ENCODE measurements at regions of chr12 and their contacts with region 1.

Region 1: DNA sequence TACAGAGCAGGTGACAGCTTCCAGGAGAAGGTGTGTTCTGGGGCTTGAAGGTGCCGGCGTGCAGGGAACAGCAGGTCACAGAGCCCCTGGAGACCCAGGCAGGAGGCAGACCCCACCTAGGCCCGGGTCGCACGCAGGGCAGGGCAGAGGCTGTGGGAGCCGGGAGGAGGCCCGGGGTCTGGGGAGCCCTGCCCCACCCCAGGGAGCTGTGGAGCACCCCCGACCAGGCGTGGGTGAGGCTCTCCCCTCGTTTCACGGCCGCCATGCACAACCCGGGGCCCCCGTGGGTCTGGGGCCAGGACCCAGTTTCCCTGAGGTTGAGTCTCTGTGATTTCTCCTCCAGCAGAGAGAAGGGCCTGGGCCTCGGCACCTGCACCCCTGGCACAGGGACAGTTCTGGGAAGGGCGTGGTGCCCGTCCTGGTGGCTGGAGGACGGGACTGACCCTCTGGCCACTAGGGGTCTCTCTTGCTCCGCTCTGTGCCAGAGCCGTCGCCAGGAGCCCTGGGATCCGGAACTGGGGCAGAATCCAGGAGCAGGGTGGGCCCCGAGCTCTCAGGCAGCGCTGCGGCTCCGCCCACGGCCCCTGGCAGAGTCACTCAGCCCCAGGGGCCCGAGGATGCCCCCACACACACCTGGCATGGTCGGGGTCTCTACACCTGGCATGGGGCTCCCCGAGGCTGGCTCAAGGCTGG is 75.2 kb upstream of the FBRSL1 start:
- DNase-seq: peak; percentile 59
- ATAC-seq: peak; percentile 100
- H3K4me3 ChIP-seq: no peak overlapping the region
- H3K27ac ChIP-seq: no peak overlapping the region
- H3K4me1 ChIP-seq: no peaks in the 10 kb centered on the region
- H3K27me3 ChIP-seq: peaks cover 12% of the 10 kb centered on the region
- CTCF ChIP-seq: peak; percentile 95
- POLR2A ChIP-seq: peak; percentile 44; the same call in 1 of the 2 replicates
- RAD21 ChIP-seq: peak; percentile 98

Region 2: GRCh38 chr12:132084621-132085290 is 330.0 kb before region 1 on chr12:
- CTCF ChIA-PET with region 1: no interaction called
- POLR2A ChIA-PET with region 1: no interaction called
- dilution Hi-C with region 1: no loop called
- in situ Hi-C with region 1: no loop called
- intact Hi-C with region 1: no loop called
- DNase-seq: peak; percentile 33
- ATAC-seq: peak; percentile 38
- H3K4me3 ChIP-seq: peak overlapping the region; percentile 81
- H3K27ac ChIP-seq: peak overlapping the region; percentile 59; the same call in 1 of the 2 replicates
- H3K4me1 ChIP-seq: peaks cover 4% of the 10 kb centered on the region; the same call in 1 of the 2 replicates
- H3K27me3 ChIP-seq: no peaks in the 10 kb centered on the region
- CTCF ChIP-seq: no peak
- POLR2A ChIP-seq: no peak
- RAD21 ChIP-seq: no peak

Region 3: DNA sequence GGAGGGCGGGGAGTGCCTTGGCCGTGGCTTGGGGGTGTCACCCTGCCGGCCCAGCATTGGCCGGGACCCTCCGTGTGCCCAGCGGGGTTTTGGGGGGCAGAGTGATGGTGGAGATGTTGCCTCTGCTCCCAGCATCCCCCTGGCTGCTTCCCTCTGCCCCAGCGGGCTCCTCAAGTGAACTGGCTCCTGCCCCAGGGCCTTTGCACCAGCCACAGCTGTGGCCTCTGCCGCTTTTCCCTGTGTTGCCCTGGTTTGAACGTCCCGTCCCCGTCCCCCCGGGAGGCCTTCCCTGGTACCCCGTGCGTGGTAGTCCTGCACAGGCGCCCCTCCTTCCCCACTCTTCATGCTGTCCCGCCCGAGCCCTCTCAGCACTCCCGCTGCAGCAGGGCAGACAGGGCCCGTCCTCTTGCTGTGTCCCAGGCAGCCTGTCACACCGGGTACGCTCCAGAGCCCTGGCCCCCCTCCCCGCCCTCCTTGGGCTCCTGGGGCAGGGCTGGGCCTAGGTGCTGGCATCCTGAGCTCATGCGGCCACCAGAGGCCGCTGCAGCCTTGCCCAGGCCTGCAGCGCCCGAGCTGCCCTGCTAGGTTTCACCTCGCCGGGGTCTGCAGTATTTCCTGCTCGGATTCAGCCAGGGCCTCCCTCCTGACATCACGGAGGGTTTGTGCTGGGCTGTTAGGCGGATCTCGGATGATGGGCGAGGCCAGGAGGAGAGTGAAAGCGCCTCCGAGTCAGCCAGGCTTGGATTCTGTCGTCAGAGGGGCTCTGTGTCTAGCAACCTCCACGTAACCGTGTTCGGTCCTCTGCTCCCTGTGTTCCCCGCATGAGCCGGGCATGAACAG is 261.1 kb before region 1 on chr12:
- CTCF ChIA-PET with region 1: interaction called, 5 read pairs
- POLR2A ChIA-PET with region 1: no interaction called
- dilution Hi-C with region 1: no loop called
- in situ Hi-C with region 1: loop called (anchors 5 kb)
- intact Hi-C with region 1: loop called (anchors 2 kb)
- DNase-seq: peak; percentile 61
- ATAC-seq: peak; percentile 99
- H3K4me3 ChIP-seq: no peak overlapping the region
- H3K27ac ChIP-seq: no peak overlapping the region
- H3K4me1 ChIP-seq: no peaks in the 10 kb centered on the region
- H3K27me3 ChIP-seq: no peaks in the 10 kb centered on the region
- CTCF ChIP-seq: peak; percentile 93
- POLR2A ChIP-seq: 0 out of 2 replicates have a peak, but pooled peaks have one; percentile 37
- RAD21 ChIP-seq: peak; percentile 97

Region 4: GRCh38 chr12:132523576-132524331 is 109.0 kb after region 1 on chr12:
- CTCF ChIA-PET with region 1: interaction called, 3 read pairs
- POLR2A ChIA-PET with region 1: no interaction called
- dilution Hi-C with region 1: no loop called
- in situ Hi-C with region 1: no loop called
- intact Hi-C with region 1: loop called (anchors 1 kb)
- DNase-seq: peak; percentile 24
- ATAC-seq: peak; percentile 89
- H3K4me3 ChIP-seq: no peak overlapping the region
- H3K27ac ChIP-seq: no peak overlapping the region
- H3K4me1 ChIP-seq: no peaks in the 10 kb centered on the region
- H3K27me3 ChIP-seq: no peaks in the 10 kb centered on the region
- CTCF ChIP-seq: peak; percentile 68
- POLR2A ChIP-seq: no peak
- RAD21 ChIP-seq: peak; percentile 64

Region 5: DNA sequence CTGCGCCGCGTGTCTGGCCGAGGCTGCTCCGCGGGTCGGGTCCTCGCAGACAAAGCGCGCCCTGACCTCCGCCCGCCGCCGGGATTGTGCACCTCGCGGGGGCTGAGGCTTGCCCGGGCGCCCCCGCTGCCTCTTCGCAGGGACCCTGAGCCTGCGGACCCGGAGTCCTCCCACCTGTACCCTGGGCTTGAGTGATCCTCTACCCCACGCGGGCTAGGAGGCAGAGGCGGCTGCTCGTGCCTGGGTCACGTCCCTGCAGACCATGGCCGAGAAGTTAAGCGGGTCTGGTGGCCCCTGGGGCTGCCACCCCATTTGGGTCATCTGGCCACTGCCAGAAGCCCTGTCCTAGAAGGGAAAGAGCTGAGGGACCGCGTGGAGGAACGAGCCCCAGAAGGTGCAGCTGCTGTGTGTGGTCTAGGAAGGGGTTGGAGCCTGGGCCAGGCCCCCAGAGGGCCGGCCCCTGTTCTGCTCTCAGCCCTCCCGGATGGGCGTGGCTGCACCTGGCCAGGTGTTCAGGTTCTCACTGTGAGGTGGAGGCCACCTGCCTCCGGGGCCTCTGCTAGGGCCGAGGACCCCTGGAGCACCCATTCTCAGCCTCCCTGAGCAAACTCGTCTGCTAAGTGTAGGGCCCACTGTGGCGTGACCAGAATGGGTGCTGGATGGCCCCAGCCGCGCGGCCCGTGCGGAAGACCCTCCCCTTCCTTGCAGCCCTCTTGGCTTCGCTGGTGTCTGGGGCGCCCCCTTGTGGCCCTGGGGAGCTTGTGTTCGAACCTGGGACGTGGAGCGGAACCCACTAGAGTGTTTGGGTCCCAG is 146.0 kb after region 1 on chr12:
- CTCF ChIA-PET with region 1: no interaction called
- POLR2A ChIA-PET with region 1: no interaction called
- dilution Hi-C with region 1: no loop called
- in situ Hi-C with region 1: no loop called
- intact Hi-C with region 1: loop called (anchors 1 kb)
- DNase-seq: peak; percentile 51
- ATAC-seq: peak; percentile 50
- H3K4me3 ChIP-seq: peak overlapping the region; percentile 93
- H3K27ac ChIP-seq: no peak overlapping the region; the same call in 1 of the 2 replicates
- H3K4me1 ChIP-seq: no peaks in the 10 kb centered on the region; the same call in 1 of the 2 replicates
- H3K27me3 ChIP-seq: no peaks in the 10 kb centered on the region
- CTCF ChIP-seq: peak; percentile 66
- POLR2A ChIP-seq: no peak
- RAD21 ChIP-seq: peak; percentile 52

Region 6: GRCh38 chr12:132638541-132639418 is 224.0 kb after region 1 on chr12:
- CTCF ChIA-PET with region 1: interaction called, 5 read pairs
- POLR2A ChIA-PET with region 1: no interaction called
- dilution Hi-C with region 1: no loop called
- in situ Hi-C with region 1: no loop called
- intact Hi-C with region 1: loop called (anchors 1 kb)
- DNase-seq: peak; percentile 60
- ATAC-seq: peak; percentile 99
- H3K4me3 ChIP-seq: no peak overlapping the region
- H3K27ac ChIP-seq: no peak overlapping the region
- H3K4me1 ChIP-seq: no peaks in the 10 kb centered on the region
- H3K27me3 ChIP-seq: no peaks in the 10 kb centered on the region
- CTCF ChIP-seq: peak; percentile 75
- POLR2A ChIP-seq: no peak
- RAD21 ChIP-seq: peak; percentile 65